ENCODE measurements at regions of chr20 and their contacts with region 1.

Region 1: GRCh38 chr20:49964964-49965780 is 17.6 kb upstream of the SNAI1 start:
- DNase-seq: peak; percentile 49
- H3K4me3 ChIP-seq: no peak overlapping the region
- H3K27ac ChIP-seq: no peak overlapping the region
- H3K4me1 ChIP-seq: peaks cover 7% of the 10 kb centered on the region
- H3K27me3 ChIP-seq: no peaks in the 10 kb centered on the region
- CTCF ChIP-seq: peak; percentile 75 to 86
- POLR2A ChIP-seq: no peak

Region 2: GRCh38 chr20:49955167-49955566 is 10.0 kb before region 1 on chr20:
- CTCF ChIA-PET with region 1: interaction called, 10 read pairs
- POLR2A ChIA-PET with region 1: no interaction called
- dilution Hi-C with region 1: no loop called
- intact Hi-C with region 1: no loop called
- DNase-seq: no peak
- H3K4me3 ChIP-seq: no peak overlapping the region
- H3K27ac ChIP-seq: no peak overlapping the region
- H3K4me1 ChIP-seq: peaks cover 10% of the 10 kb centered on the region
- H3K27me3 ChIP-seq: no peaks in the 10 kb centered on the region
- CTCF ChIP-seq: no peak
- POLR2A ChIP-seq: no peak